H1 (cell line): ENCODE measurements at regions of chr4 and their contacts with region 1.

Region 1: DNA sequence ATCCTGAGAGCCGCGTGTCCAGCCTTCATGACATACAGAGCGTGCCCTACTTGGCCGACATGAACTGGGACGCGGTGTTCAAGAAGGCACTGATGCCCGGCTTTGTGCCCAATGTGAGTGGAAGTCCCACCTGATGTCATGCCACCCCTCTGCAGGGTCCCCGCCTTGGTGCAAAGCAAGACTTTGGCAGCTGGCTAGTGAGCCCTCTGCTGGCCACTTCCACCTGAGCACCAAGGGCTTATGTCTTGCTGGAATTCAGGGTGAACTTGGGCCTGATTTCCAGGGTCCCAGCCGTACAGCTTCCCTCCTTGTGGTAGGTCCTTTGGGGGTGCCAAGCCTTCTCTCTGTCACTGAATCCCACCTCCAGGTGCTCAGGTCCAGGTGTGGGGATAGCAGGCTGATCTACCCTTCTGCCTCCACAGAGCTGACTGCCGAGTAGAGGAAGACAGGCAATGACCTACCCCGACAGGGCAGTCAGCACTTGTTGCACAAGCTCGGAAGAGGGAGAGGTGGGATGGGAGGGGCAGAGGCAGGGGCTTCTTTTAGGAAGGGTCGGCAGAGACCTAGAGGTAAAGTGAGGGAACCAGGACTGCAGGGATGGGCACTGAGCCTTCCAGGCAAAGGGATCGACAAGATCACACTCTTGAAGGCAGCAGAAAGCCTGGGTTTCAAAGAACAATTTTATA is 248.1 kb downstream of the EVC2 start:
- DNase-seq: peak; percentile 38 to 74
- H3K4me3 ChIP-seq: no peak overlapping the region
- H3K27ac ChIP-seq: no peak overlapping the region
- H3K4me1 ChIP-seq: no peaks in the 10 kb centered on the region
- H3K27me3 ChIP-seq: no peaks in the 10 kb centered on the region
- CTCF ChIP-seq: peak in 2 of 3 experiments; percentile 89 to 92; a peak in 3 of 4 replicates
- EP300 ChIP-seq: no peak
- POLR2A ChIP-seq: no peak
- RAD21 ChIP-seq: peak; percentile 64 to 87

Region 2: DNA sequence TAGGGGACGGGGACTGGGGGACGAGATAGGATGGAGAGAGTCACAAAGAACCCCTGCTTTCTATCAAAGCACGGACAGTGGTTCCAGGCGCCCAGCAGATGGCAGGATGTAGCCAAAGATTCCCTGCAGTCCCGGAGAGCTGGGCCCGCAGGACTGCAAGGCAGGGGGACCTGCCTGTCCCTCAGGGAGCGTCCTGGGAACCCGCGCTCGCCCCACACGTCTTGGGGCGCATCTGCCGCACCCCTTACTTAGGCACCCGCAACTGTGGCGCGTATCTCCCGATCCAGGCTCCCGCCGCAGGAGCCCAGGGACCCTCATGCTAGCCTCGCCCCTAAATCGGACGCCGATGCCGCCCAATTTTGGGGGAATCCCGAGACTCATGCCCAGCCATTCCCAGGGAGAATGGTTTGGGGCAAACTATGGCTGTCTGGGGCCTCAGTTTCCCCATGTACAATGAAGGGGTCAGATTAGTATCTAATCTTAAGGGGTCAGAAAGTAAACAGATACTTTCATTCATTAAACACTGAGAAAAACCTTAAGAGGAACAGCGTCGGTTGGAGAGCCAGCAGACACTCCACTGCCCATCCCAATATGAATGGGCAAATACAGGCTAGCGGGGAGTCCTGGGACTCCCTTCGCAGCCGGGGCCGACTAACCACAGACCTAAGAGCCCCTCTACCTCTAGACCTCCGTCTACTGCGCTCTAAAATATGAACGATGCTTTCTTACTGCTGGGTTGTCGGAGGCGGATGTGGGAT is 409.6 kb before region 1 on chr4:
- CTCF ChIA-PET with region 1: interaction called, 10 read pairs
- POLR2A ChIA-PET with region 1: no interaction called
- DNase-seq: peak; percentile 53 to 82
- H3K4me3 ChIP-seq: peak overlapping the region; percentile 29 to 70 (median 58)
- H3K27ac ChIP-seq: no peak overlapping the region
- H3K4me1 ChIP-seq: peaks cover 0 to 7% (median 5%) of the 10 kb centered on the region in 4 experiments; a peak in 5 of 7 replicates
- H3K27me3 ChIP-seq: peaks cover 15 to 35% (median 24%) of the 10 kb centered on the region in 4 experiments
- CTCF ChIP-seq: peak; percentile 78 to 90 (median 85)
- EP300 ChIP-seq: no peak
- POLR2A ChIP-seq: no peak
- RAD21 ChIP-seq: peak; percentile 95 to 97

Region 3: GRCh38 chr4:5399790-5400421 is 60.4 kb before region 1 on chr4:
- CTCF ChIA-PET with region 1: interaction called, 92 read pairs
- POLR2A ChIA-PET with region 1: no interaction called
- DNase-seq: peak in 1 of 2 experiments; percentile 49
- H3K4me3 ChIP-seq: no peak overlapping the region
- H3K27ac ChIP-seq: no peak overlapping the region
- H3K4me1 ChIP-seq: no peaks in the 10 kb centered on the region
- H3K27me3 ChIP-seq: no peaks in the 10 kb centered on the region
- CTCF ChIP-seq: peak; percentile 65 to 82 (median 81)
- EP300 ChIP-seq: no peak
- POLR2A ChIP-seq: no peak
- RAD21 ChIP-seq: peak; percentile 65 to 74

Region 4: DNA sequence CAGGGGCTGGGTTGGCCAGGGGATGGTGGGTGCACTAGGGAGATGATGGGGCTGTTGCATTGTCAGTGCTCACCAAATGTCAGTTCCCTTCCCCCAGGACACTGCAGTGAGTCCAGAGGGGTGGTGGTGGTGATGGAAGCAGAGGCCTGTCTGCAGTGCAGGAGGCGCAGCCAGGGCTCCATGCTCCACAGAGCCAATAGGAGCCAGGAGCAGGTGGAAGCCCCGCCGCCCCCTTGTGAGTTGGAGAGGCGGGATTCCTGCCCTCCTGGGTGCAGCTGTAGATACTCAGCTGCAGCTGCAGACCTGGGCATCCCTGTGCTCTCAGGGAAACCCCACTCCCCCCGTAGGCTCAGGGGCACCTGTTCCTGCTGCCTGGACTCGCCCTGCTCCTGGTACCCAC is 36.6 kb before region 1 on chr4:
- CTCF ChIA-PET with region 1: interaction called, 16 read pairs
- POLR2A ChIA-PET with region 1: no interaction called
- DNase-seq: no peak
- H3K4me3 ChIP-seq: no peak overlapping the region
- H3K27ac ChIP-seq: no peak overlapping the region
- H3K4me1 ChIP-seq: no peaks in the 10 kb centered on the region; a peak in 1 of 7 replicates
- H3K27me3 ChIP-seq: no peaks in the 10 kb centered on the region
- CTCF ChIP-seq: no peak
- EP300 ChIP-seq: no peak
- POLR2A ChIP-seq: no peak
- RAD21 ChIP-seq: no peak

Region 5: DNA sequence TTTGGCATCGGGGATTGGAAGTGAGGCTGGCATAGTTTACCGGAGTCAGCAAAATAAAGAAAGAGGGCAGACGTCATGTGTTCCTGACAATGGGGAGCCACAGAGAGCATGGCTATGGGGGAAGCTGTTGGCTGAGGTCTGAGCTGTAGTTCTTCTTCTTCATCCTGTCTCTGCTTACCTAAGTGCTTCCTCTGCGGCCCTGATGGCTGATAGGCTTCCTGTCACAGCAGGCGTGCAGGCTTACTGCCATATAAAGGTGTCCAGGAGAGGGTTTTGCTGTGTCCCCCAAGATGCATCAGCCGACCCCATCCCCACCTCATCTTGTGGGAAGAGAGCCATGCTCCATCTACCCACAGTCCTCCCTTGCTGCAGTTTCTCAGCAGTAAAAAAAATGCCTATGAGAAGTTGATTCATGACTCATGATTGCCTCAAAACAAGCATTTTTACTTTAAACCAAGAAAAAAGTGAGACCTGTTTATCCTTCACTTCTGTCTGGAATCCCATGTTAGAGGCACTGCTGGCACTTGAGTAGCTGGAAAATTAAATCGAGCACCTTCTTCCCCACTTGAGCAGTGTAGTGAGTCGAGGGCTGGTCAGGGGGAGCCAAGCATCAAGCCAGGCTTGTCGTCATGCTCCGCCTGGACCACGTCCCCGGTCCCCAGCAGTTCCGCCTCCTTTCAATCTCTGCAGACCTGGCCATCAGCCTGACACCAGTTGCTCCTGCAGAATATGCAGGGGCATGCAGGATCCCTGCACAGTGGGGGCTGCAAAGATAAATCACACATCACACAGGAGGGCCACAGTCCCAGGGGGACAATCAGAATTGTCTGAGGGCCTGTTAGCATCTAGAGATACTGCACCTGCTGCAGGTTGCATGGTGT is 10.3 kb after region 1 on chr4:
- CTCF ChIA-PET with region 1: interaction called, 27 read pairs
- POLR2A ChIA-PET with region 1: no interaction called
- DNase-seq: no peak
- H3K4me3 ChIP-seq: no peak overlapping the region
- H3K27ac ChIP-seq: no peak overlapping the region
- H3K4me1 ChIP-seq: no peaks in the 10 kb centered on the region
- H3K27me3 ChIP-seq: no peaks in the 10 kb centered on the region
- CTCF ChIP-seq: no peak
- EP300 ChIP-seq: no peak
- POLR2A ChIP-seq: no peak
- RAD21 ChIP-seq: no peak

Region 6: DNA sequence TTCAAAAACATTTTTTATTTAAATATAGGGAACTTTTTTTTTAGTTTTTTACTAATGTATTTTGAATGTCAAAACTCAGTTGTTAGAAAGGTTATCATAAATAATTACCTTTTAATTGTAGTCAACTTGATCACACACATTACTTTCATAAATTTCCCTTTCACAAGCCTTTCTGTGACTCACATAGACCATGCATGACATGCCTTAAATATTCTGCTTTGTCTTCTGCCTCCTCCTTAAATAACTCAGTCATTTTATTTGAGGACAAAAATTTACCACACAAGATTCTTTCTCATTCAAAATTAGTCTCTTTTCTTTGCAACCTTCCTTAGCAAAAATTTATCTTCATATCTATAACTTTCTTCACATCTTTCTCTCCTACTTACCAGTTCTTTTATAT is 28.2 kb after region 1 on chr4:
- CTCF ChIA-PET with region 1: no interaction called
- POLR2A ChIA-PET with region 1: no interaction called
- DNase-seq: no peak
- H3K4me3 ChIP-seq: no peak overlapping the region
- H3K27ac ChIP-seq: no peak overlapping the region
- H3K4me1 ChIP-seq: no peaks in the 10 kb centered on the region
- H3K27me3 ChIP-seq: no peaks in the 10 kb centered on the region
- CTCF ChIP-seq: no peak
- EP300 ChIP-seq: no peak
- POLR2A ChIP-seq: no peak
- RAD21 ChIP-seq: no peak

Region 7: DNA sequence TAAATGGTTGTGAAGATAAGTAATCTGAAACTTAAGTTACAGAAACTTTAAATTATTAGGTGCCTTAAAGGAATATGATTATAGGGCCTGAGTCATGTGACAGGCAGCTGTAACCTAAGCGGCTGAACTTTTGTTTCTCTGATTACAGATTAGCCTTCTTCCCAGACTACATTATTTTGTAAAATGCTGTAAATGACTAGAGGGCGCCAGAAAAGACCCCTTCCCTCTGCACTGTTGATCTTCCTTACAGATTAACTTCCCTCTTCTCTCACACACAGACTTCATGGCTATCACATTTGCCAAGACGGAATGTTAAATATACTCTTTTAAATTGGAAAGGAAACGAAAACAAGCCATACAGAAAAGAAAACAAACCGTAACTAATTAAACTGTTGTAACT is 151.5 kb after region 1 on chr4:
- CTCF ChIA-PET with region 1: no interaction called
- POLR2A ChIA-PET with region 1: no interaction called
- DNase-seq: no peak
- H3K4me3 ChIP-seq: no peak overlapping the region
- H3K27ac ChIP-seq: no peak overlapping the region
- H3K4me1 ChIP-seq: no peaks in the 10 kb centered on the region
- H3K27me3 ChIP-seq: no peaks in the 10 kb centered on the region
- CTCF ChIP-seq: peak in 1 of 3 experiments; percentile 5; a peak in 2 of 4 replicates
- EP300 ChIP-seq: no peak
- POLR2A ChIP-seq: no peak
- RAD21 ChIP-seq: no peak